Activated CD4-positive, alpha-beta T cell treated with anti-CD3 and anti-CD28 coated beads for 36 hours (primary cell): ENCODE measurements at regions of chr2 and their contacts with region 1.

Region 1: GRCh38 chr2:20225294-20226151 is 593 bp upstream of the SDC1 start:
- DNase-seq: peak; percentile 66
- ATAC-seq: peak; percentile 83
- H3K4me3 Mint-ChIP-seq: peak overlapping the region; percentile 35
- H3K27ac Mint-ChIP-seq: no peak overlapping the region
- H3K4me1 Mint-ChIP-seq: peaks cover 3% of the 10 kb centered on the region
- H3K27me3 Mint-ChIP-seq: peaks cover 48% of the 10 kb centered on the region

Region 2: DNA sequence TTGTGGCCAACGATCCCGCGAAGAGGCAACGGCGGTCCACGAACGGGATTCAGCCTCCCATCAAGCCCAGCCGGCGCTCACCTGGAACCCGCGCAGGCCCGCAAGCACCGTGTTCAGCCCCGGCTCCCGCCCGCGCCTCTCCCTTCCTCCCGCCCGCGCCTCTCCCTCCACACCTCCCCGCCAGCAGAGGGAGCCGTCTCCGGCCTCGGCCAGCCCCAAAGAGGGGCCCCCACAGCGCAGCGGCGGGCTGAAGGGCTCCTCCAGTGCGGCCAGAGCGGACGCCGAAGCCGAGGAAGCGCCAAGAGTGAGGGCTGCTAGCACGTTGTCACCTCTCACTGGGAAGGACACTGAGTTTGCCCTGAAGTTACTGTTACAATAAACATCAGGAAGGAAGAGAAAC is 118.8 kb before region 1 on chr2:
- CTCF ChIA-PET with region 1: no interaction called
- POLR2A ChIA-PET with region 1: no interaction called
- intact Hi-C with region 1: loop called in 1 of 2 experiments (anchors 2 kb)
- DNase-seq: peak; percentile 73
- ATAC-seq: peak; percentile 51
- H3K4me3 Mint-ChIP-seq: peak overlapping the region; percentile 50
- H3K27ac Mint-ChIP-seq: no peak overlapping the region
- H3K4me1 Mint-ChIP-seq: no peaks in the 10 kb centered on the region
- H3K27me3 Mint-ChIP-seq: peaks cover 33% of the 10 kb centered on the region

Region 3: DNA sequence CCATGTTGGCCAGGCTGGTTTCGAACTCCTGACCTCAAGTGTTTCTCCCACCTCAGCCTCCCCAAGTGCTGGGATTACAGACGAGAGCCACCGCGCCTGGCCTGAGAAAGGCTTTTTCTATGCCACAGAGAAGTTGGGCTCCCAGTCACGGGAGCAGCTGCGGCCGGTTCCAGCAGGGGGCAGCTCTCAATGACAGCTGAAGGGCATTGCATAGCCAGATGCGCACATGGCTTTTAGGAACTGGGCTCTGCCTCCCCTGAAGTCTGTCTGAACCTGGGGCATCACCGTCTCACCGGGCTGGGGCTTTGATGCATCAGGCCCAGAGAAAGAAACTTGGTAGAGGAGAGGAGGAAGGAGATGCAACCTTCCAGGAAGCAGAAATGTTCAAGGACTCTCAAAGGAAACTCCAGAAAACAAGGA is 89.9 kb before region 1 on chr2:
- CTCF ChIA-PET with region 1: interaction called, 4 read pairs
- POLR2A ChIA-PET with region 1: no interaction called
- intact Hi-C with region 1: loop called (anchors 2 to 5 kb)
- DNase-seq: peak; percentile 72
- ATAC-seq: peak; percentile 71
- H3K4me3 Mint-ChIP-seq: no peak overlapping the region
- H3K27ac Mint-ChIP-seq: no peak overlapping the region
- H3K4me1 Mint-ChIP-seq: no peaks in the 10 kb centered on the region
- H3K27me3 Mint-ChIP-seq: peaks cover 8% of the 10 kb centered on the region